ENCODE measurements at regions of chr1 and their contacts with region 1.

Region 1: GRCh38 chr1:146036965-146037646 is 15.6 kb upstream of the HJV start:
- DNase-seq: peak; percentile 87
- H3K4me3 Mint-ChIP-seq: peak overlapping the region; percentile 100
- H3K27ac Mint-ChIP-seq: peak overlapping the region; percentile 99
- H3K4me1 Mint-ChIP-seq: peaks cover 32% of the 10 kb centered on the region
- H3K27me3 Mint-ChIP-seq: peaks cover 9% of the 10 kb centered on the region

Region 2: DNA sequence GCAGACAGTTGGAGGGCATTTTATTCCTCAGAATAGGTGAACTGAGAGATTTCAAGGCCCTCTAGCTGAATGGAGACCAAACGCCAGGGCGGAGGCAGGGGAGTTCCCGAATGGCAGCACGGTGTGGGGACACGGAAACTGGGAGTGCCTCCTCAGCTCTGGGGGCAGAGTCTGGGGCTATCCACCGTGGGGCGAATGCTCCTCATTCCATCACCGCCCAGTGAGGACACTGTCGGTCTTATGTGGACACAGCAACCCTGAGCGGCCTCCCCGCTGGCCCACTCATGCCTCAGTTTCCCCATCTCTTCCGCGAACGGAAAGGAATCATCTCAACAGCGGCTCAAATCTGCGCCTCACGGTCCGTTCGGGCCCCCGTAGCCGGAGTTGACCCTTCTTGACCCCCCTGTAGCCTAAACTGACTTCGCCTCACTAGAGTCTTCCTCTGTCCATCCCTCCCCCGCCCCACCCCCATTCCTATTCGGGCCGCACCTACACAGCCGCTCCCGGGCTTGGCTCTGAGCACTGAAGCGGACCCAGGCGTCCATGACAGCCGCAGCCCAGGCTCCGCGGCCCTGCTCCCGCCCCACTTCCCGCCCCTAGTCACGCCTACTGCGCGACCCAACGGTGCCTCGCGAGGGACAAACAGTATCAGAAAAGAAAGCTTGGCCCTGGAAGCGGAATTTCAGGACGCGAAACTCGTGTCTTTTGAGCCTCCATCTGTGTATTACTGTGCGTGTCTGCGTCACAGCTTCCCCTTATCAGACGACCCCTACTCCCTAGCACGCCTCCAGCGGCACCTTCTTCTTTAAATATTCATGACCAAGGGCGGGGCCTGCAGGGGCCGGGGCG is 118.7 kb before region 1 on chr1 and contains the start of gene PEX11B:
- CTCF ChIA-PET with region 1: no interaction called
- POLR2A ChIA-PET with region 1: interaction called, 4 read pairs
- intact Hi-C with region 1: loop called (anchors 5 kb)
- DNase-seq: peak; percentile 94
- H3K4me3 Mint-ChIP-seq: peak within 1 kb of the TSS; percentile 90
- H3K27ac Mint-ChIP-seq: peak within 1 kb of the TSS; percentile 96
- H3K4me1 Mint-ChIP-seq: peaks cover 45% of the 10 kb centered on the region
- H3K27me3 Mint-ChIP-seq: no peaks in the 10 kb centered on the region
- total RNA-seq, gene PEX11B: 22.8 to 25.6 TPM

Region 3: DNA sequence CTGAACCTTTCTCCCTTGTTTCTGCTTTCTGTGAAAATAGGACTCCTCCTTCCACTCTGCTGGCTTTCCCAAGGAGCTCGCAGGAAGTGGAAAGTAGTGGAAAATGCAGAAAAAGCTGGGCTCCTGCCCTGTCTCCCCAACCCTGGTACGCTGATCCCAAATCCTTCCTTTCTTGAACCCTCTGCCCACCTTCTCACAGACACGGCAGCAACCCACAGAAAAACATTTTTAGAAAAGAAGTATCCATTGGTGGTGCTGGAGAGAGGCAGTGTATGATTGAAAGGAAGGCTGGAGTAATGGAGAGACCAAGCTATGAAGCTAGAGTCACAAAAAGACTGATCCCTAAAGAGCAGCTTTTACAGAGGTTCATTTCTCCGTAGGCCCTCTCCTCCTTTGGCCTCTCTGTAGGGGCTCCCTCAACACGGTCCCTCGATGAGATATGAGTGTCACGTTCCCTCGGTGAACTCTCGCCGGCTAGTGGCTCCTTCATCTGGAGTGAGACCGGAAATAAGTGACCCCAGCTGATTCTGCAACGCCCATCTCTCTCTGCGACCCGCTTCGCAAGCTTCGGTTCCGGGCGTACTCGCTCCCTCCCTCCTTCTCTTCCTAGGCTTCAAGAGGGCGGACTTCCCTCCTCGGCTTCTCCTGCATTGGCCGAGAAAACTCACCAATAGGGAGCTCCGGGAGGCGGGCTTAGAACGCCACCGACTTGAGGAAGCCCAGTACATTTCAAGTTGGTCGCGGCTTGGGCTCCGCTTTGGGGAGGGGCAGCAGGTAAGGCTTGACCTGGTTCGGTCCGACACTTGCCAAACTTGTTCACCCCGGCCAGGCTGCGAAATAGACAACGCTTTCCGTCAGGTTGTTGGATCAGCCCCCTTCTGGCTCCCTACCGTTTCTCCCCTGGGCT is 72.9 kb before region 1 on chr1 and contains the starts of genes ANKRD34A and POLR3GL:
- CTCF ChIA-PET with region 1: interaction called, 5 read pairs
- POLR2A ChIA-PET with region 1: interaction called, 14 read pairs
- intact Hi-C with region 1: loop called (anchors 1 kb)
- DNase-seq: peak; percentile 96
- H3K4me3 Mint-ChIP-seq: peak within 1 kb of the TSS; percentile 98
- H3K27ac Mint-ChIP-seq: peak within 1 kb of the TSS; percentile 95
- H3K4me1 Mint-ChIP-seq: peaks cover 31% of the 10 kb centered on the region
- H3K27me3 Mint-ChIP-seq: no peaks in the 10 kb centered on the region
- total RNA-seq, gene ANKRD34A: 4.6 to 4.7 TPM
- total RNA-seq, gene POLR3GL: 27.3 to 30.9 TPM

Region 4: GRCh38 chr1:146012737-146013403 is 24.2 kb before region 1 on chr1:
- CTCF ChIA-PET with region 1: interaction called, 15 read pairs
- POLR2A ChIA-PET with region 1: no interaction called
- intact Hi-C with region 1: no loop called
- DNase-seq: peak; percentile 63
- H3K4me3 Mint-ChIP-seq: no peak overlapping the region
- H3K27ac Mint-ChIP-seq: no peak overlapping the region
- H3K4me1 Mint-ChIP-seq: peaks cover 10% of the 10 kb centered on the region
- H3K27me3 Mint-ChIP-seq: peaks cover 4% of the 10 kb centered on the region

Region 5: DNA sequence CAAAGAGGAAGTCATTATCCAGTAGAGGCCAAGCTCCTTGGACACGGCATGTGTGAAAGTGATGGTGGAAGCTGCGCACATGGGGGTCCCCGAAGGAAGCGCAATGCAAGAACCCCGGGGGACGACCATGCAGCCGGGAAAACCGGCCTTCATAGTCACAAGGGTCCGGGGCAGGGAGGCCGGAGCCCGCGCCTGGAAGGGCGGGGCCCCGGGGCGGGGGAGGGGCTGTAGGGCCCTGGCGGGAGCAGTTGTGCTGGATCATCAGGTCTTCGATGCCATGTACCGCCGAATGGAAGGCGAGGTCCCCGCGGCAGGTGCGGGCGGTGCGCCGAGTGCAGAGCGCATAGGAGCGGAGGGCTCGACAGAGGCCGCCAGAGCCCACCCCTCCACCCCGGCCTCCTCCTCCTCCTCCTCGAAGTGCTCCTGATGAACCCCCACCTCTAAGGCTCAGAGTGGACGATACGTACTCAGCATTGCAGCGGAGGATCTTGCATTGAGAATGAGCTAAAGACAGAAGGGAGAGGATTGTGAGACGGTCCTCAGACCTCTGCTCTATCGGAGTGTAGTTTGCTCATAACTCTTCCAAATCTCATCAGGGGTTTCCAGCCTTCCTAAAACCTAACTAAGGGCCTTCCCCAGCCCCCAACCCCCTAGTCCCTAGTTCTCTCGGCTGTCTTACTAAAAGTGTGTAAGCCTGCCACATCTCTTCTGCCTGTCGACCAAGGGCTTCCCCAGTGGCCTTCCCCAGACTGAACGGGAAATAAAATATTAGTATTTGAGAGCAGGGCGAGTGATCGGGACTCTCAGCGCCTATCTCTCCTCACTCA is 17.7 kb before region 1 on chr1:
- CTCF ChIA-PET with region 1: interaction called, 15 read pairs
- POLR2A ChIA-PET with region 1: no interaction called
- intact Hi-C with region 1: no loop called
- DNase-seq: no peak
- H3K4me3 Mint-ChIP-seq: peak overlapping the region; percentile 6
- H3K27ac Mint-ChIP-seq: no peak overlapping the region
- H3K4me1 Mint-ChIP-seq: peaks cover 8% of the 10 kb centered on the region
- H3K27me3 Mint-ChIP-seq: peaks cover 29% of the 10 kb centered on the region

Region 6: GRCh38 chr1:146049436-146049835 is 12.3 kb after region 1 on chr1:
- CTCF ChIA-PET with region 1: interaction called, 5 read pairs
- POLR2A ChIA-PET with region 1: interaction called, 145 read pairs
- intact Hi-C with region 1: no loop called
- DNase-seq: peak; percentile 31
- H3K4me3 Mint-ChIP-seq: no peak overlapping the region
- H3K27ac Mint-ChIP-seq: no peak overlapping the region
- H3K4me1 Mint-ChIP-seq: peaks cover 32% of the 10 kb centered on the region
- H3K27me3 Mint-ChIP-seq: no peaks in the 10 kb centered on the region

Measured in activated CD4-positive, alpha-beta memory T cell treated with anti-CD3 and anti-CD28 coated beads for 36 hours (primary cell).